Motor neuron (in vitro differentiated cells): ENCODE measurements at regions of chr14 and their contacts with region 1.

Region 1: DNA sequence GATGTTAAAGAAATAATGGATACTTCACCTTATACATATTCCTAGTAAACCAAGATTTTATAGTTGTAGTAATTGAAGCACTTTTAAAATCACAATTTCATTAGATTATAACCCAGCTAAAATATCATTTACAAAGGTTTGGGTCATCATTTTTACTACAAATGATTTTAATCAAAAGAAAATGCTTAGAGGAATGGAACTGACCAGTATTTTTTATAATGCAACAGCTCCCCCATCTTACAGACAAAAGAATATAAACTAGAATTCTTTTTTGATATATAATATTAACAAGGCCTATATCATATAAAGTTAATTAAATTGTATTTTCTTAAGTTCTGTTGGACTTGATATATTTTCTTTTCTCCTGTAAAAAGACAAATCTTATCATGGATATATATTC is 20.4 kb upstream of the LRFN5 start:
- ATAC-seq: no peak
- H3K4me3 ChIP-seq: no peak overlapping the region
- H3K27ac ChIP-seq: no peak overlapping the region
- H3K4me1 ChIP-seq: no peaks in the 10 kb centered on the region

Region 2: DNA sequence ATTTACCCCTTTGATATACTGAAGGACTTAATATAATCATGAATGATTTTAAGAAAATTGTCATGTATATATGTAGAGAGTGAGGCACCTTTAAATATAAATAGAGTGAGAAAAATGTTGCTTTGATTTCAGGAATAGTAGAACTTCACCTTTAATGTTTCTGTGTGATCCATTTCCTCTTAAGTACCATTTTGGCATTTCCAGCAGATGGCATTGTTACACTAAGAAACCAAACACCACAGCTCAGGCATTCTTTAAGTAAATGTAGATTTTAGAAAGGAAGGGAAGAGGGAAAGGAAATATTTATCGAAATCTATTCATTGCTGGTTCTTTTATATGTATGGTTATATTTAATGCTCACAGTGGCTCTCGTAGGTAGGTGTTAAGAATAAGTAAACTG is 1597.3 kb before region 1 on chr14:
- in situ Hi-C with region 1: loop called in 1 of 9 experiments (anchors 25 kb)
- ATAC-seq: peak in 3 of 8 experiments; percentile 29 to 81 (median 36)
- H3K4me3 ChIP-seq: no peak overlapping the region
- H3K27ac ChIP-seq: no peak overlapping the region
- H3K4me1 ChIP-seq: no peaks in the 10 kb centered on the region

Region 3: DNA sequence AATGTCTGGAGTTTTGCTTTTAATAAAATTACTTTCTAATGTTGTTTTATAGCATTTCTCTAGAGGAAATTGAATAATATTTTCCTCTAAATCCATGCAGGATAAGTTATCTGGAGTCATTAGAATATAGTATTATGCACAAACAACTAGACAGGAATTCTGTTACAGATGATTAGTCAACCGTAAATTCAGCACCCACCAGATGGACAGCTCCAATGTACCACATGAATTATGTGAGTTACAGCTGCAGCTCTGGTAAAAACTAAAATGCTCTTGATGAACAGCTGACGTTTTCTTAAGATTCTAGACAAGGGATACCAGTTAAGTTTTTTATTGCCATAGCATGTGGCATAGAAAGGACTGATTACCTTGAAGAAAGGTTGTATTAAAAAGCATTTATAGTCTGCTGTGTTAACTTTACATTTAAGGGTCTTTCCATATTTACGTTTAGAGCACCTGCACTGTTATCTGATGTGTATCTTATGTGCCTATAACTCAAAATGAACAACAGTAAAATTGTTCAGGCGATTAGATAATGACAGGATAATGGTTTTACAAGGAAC is 301.0 kb before region 1 on chr14:
- in situ Hi-C with region 1: loop called in 1 of 9 experiments (anchors 25 kb)
- ATAC-seq: peak in 5 of 8 experiments; percentile 26 to 64 (median 43)
- H3K4me3 ChIP-seq: no peak overlapping the region
- H3K27ac ChIP-seq: no peak overlapping the region
- H3K4me1 ChIP-seq: peaks cover 0 to 6% of the 10 kb centered on the region in 2 donors